Ovary (tissue), 10 donors: ENCODE measurements at regions of chr2 and their contacts with region 1.

Region 1: GRCh38 chr2:169824373-169825333 is at the start of gene METTL5:
- DNase-seq: peak; percentile 76 to 89 (median 82)
- H3K4me3 ChIP-seq: peak within 1 kb of the TSS; percentile 81
- H3K27ac ChIP-seq: peak within 1 kb of the TSS; percentile 9 to 60
- H3K4me1 ChIP-seq: peaks cover 6% of the 10 kb centered on the region
- H3K27me3 ChIP-seq: no peaks in the 10 kb centered on the region
- CTCF ChIP-seq: peak; percentile 76 to 96 (median 91)
- EP300 ChIP-seq: no peak
- POLR2A ChIP-seq: peak; percentile 53
- total RNA-seq, gene METTL5: 19.9 to 44.0 (median 26.4) TPM

Region 2: GRCh38 chr2:169910109-169910799 is 85.6 kb after region 1 on chr2:
- intact Hi-C with region 1: loop called in 1 of 4 experiments (anchors 10 kb)
- DNase-seq: no peak
- H3K4me3 ChIP-seq: no peak overlapping the region
- H3K27ac ChIP-seq: no peak overlapping the region
- H3K4me1 ChIP-seq: no peaks in the 10 kb centered on the region
- H3K27me3 ChIP-seq: no peaks in the 10 kb centered on the region
- CTCF ChIP-seq: no peak
- EP300 ChIP-seq: no peak
- POLR2A ChIP-seq: no peak

Region 3: GRCh38 chr2:169928463-169928864 is 103.8 kb after region 1 on chr2:
- intact Hi-C with region 1: loop called in 3 of 4 experiments (anchors 2 to 10 kb)
- DNase-seq: no peak
- H3K4me3 ChIP-seq: no peak overlapping the region
- H3K27ac ChIP-seq: no peak overlapping the region
- H3K4me1 ChIP-seq: no peaks in the 10 kb centered on the region
- H3K27me3 ChIP-seq: no peaks in the 10 kb centered on the region
- CTCF ChIP-seq: peak; percentile 27 to 60 (median 53)
- EP300 ChIP-seq: no peak
- POLR2A ChIP-seq: no peak

Region 4: DNA sequence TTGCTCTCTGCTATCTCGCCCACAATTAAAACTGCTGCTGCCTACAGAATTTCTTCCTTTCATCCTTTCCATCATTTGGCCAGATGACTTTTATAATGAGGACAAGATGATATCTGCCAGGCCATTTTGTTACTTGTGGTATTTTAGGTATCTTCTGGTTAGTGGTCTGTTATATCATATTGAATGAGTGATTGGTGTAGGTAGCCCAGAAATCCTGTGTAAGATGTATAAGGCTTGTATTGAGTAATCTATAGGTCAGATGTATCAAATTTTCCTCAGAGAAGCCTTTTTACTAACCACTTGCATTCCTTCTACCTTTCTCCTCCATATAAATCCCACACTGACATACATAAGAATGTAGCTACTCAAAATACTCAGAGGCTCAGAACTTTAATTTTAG is 120.9 kb after region 1 on chr2:
- intact Hi-C with region 1: no loop called
- DNase-seq: no peak
- H3K4me3 ChIP-seq: no peak overlapping the region
- H3K27ac ChIP-seq: no peak overlapping the region
- H3K4me1 ChIP-seq: no peaks in the 10 kb centered on the region
- H3K27me3 ChIP-seq: no peaks in the 10 kb centered on the region
- CTCF ChIP-seq: no peak
- EP300 ChIP-seq: no peak
- POLR2A ChIP-seq: no peak